ENCODE measurements at regions of chr11 and their contacts with region 1.

Region 1: GRCh38 chr11:120229451-120230424 is 10.2 kb upstream of the POU2F3 start:
- DNase-seq: no peak
- ATAC-seq: peak; percentile 55; the same call in 1 of the 2 replicates
- H3K4me3 ChIP-seq: no peak overlapping the region
- H3K27ac ChIP-seq: no peak overlapping the region
- H3K4me1 ChIP-seq: no peaks in the 10 kb centered on the region
- H3K27me3 ChIP-seq: peaks cover 14% of the 10 kb centered on the region
- CTCF ChIP-seq: peak; percentile 81

Region 2: GRCh38 chr11:119774172-119774763 is 455.5 kb before region 1 on chr11:
- CTCF ChIA-PET with region 1: no interaction called
- POLR2A ChIA-PET with region 1: no interaction called
- in situ Hi-C with region 1: no loop called
- intact Hi-C with region 1: no loop called
- DNase-seq: no peak
- ATAC-seq: no peak
- H3K4me3 ChIP-seq: no peak overlapping the region
- H3K27ac ChIP-seq: no peak overlapping the region
- H3K4me1 ChIP-seq: no peaks in the 10 kb centered on the region
- H3K27me3 ChIP-seq: peaks cover 8% of the 10 kb centered on the region; the same call in 1 of the 2 replicates
- CTCF ChIP-seq: no peak

Region 3: GRCh38 chr11:120172054-120172911 is 57.5 kb before region 1 on chr11:
- CTCF ChIA-PET with region 1: interaction called, 6 read pairs
- POLR2A ChIA-PET with region 1: no interaction called
- in situ Hi-C with region 1: no loop called
- intact Hi-C with region 1: loop called (anchors 1 kb)
- DNase-seq: peak; percentile 30
- ATAC-seq: peak; percentile 70
- H3K4me3 ChIP-seq: no peak overlapping the region
- H3K27ac ChIP-seq: no peak overlapping the region
- H3K4me1 ChIP-seq: 0 out of 2 replicates have a peak, but pooled peaks cover 4% of the 10 kb centered on the region
- H3K27me3 ChIP-seq: peaks cover 45% of the 10 kb centered on the region
- CTCF ChIP-seq: peak; percentile 89

Measured in Panc1 (cell line).